PC-9 (cell line): ENCODE measurements at regions of chr10 and their contacts with region 1.

Region 1: DNA sequence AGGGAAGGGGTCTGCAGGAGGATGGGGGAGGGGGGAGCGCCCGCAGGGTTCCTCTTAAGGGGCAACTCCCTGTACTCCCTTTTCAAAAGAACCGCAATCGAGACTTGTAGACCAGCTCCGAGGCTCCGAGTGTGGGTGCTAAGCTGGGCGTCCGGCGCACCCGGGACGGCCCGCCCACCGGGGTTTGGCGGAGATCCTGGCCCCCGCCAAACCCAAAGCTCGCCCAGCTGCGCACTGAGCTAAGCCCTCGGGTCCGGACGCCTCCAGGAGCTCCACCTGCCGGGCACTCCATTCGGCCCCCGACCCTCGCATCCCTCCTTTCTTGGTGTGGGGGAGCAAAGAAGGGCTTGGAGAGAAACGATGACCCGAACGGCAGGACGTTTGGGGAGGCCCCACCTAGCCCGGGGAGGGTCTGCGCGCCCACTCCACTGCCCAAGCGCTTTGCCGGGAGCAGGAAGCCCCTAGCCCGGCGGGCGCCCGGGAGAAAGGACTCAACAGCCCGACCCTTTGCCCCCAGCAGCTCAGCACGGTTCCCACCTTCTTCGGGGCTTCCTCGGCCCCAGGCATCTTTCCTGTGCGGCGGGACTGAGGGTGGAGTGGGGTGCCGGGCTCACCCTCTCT is 651 bp downstream of the AFAP1L2 start:
- DNase-seq: peak in 1 of 2 experiments; percentile 36
- H3K4me3 ChIP-seq: peak overlapping the region; percentile 75
- H3K27ac ChIP-seq: peak overlapping the region; percentile 46
- H3K4me1 ChIP-seq: peaks cover 32% of the 10 kb centered on the region
- H3K27me3 ChIP-seq: no peaks in the 10 kb centered on the region
- CTCF ChIP-seq: peak; percentile 37; the same call in 1 of the 2 replicates

Region 2: GRCh38 chr10:114346271-114347031 is 57.2 kb before region 1 on chr10:
- CTCF ChIA-PET with region 1: no interaction called
- POLR2A ChIA-PET with region 1: no interaction called
- intact Hi-C with region 1: loop called (anchors 5 kb)
- DNase-seq: peak in 1 of 2 experiments; percentile 68
- H3K4me3 ChIP-seq: no peak overlapping the region
- H3K27ac ChIP-seq: no peak overlapping the region
- H3K4me1 ChIP-seq: no peaks in the 10 kb centered on the region
- H3K27me3 ChIP-seq: no peaks in the 10 kb centered on the region
- CTCF ChIP-seq: no peak

Region 3: DNA sequence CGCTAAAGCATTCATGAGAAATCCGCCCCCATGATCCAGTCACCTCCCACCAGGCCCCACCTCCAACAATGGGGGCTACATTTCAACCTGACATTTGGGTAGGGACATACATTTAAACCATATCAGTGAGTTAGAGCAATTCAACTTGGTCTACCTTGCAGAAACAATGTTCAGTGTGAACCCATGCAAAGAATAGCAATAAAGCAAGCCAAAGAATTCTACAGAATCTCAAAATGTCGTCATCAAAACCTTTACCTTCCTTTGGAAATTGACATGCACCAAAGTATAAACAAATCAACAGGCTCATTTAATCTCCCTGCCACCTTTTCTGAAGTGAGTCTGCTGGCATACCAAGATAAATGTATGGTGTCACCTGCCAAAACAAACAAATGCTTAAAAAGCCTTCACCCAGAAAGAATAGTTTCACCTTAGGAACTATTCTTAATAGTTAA is 323.2 kb after region 1 on chr10:
- CTCF ChIA-PET with region 1: no interaction called
- POLR2A ChIA-PET with region 1: no interaction called
- intact Hi-C with region 1: no loop called
- DNase-seq: peak in 1 of 2 experiments; percentile 89
- H3K4me3 ChIP-seq: no peak overlapping the region
- H3K27ac ChIP-seq: peak overlapping the region; percentile 57
- H3K4me1 ChIP-seq: peaks cover 45% of the 10 kb centered on the region
- H3K27me3 ChIP-seq: no peaks in the 10 kb centered on the region
- CTCF ChIP-seq: no peak

Region 4: GRCh38 chr10:114810926-114811325 is 407.3 kb after region 1 on chr10:
- CTCF ChIA-PET with region 1: no interaction called
- POLR2A ChIA-PET with region 1: interaction called, 10 read pairs
- intact Hi-C with region 1: no loop called
- DNase-seq: no peak
- H3K4me3 ChIP-seq: no peak overlapping the region
- H3K27ac ChIP-seq: no peak overlapping the region
- H3K4me1 ChIP-seq: no peaks in the 10 kb centered on the region
- H3K27me3 ChIP-seq: no peaks in the 10 kb centered on the region
- CTCF ChIP-seq: no peak